Activated B cell treated with CpG ODN at 0.5 μM for 24 hours (primary cell): ENCODE measurements at regions of chr5 and their contacts with region 1.

Region 1: DNA sequence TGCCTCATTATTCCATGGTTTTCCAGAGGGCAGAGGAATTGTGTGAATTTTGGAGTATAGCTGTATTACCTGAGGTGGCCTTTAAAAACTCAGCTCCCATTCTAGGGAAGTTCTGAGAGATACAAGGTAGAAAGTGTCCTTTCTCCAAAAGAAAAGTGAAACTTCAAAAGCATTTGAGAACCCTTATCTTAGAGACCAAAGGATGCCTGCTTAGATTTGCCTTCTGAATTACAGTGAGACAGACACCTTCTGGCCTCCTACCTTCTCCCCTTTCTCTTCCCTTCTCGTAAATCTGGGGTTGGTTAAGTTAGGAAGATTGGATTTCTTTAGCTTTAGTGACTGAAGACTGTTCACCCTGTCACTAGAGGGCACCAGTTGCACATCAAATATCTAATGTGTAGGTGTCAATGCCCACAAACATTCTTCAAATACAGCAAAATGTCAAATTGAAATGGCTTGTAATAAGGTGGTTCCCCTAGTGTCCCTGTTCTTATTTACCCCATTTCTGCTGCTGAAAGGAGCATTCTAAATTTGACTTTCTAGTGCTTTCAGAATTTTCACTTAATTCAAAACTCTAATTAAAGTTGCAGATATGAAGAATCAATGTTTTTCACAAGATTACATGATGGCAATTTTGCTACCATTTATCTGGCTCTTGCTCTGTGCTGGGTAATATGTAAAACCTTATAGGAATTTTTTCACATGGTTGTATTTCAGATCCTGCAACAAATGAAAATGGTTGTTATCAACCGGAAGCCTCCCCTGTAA is 46.7 kb downstream of the PRRC1 start:
- DNase-seq: no peak
- ATAC-seq: peak; percentile 64
- H3K4me3 Mint-ChIP-seq: no peak overlapping the region
- H3K27ac Mint-ChIP-seq: no peak overlapping the region
- H3K4me1 Mint-ChIP-seq: peaks cover 3% of the 10 kb centered on the region
- H3K27me3 Mint-ChIP-seq: peaks cover 11% of the 10 kb centered on the region
- CTCF ChIP-seq: peak; percentile 38

Region 2: DNA sequence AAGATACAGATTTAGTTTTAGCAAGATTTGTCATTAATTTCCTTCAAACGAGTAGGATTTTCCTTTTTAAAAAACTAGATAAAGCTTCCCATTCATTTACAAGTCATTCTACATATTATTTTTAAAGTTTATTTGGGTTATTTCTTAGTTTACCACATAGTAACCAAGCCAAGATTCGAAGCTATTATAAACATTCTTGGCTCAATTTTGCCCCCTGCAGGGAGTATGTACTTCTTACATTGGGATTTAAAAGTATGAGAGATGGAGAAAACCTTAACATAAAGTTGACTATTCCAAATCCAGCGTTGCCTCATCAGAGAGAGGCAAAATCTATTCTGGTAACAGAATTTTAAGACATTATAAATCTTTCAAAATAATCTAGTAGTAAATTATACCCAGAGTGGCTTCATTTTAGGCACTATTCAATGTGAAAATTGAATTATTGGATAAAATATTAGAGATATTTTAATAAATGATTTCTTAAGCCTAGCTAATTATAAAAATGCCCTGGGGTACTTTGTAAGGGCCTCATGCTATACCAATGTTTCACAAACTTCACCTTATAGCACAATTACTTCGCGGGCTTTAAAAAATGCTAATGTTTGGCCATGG is 934.8 kb after region 1 on chr5:
- CTCF ChIA-PET with region 1: interaction called, 5 read pairs
- POLR2A ChIA-PET with region 1: no interaction called
- intact Hi-C with region 1: loop called (anchors 2 kb)
- DNase-seq: no peak
- ATAC-seq: no peak
- H3K4me3 Mint-ChIP-seq: no peak overlapping the region
- H3K27ac Mint-ChIP-seq: no peak overlapping the region
- H3K4me1 Mint-ChIP-seq: no peaks in the 10 kb centered on the region
- H3K27me3 Mint-ChIP-seq: no peaks in the 10 kb centered on the region
- CTCF ChIP-seq: no peak

Region 3: GRCh38 chr5:128844354-128844923 is 1280.3 kb after region 1 on chr5:
- CTCF ChIA-PET with region 1: no interaction called
- POLR2A ChIA-PET with region 1: no interaction called
- intact Hi-C with region 1: loop called (anchors 5 kb)
- DNase-seq: no peak
- ATAC-seq: no peak
- H3K4me3 Mint-ChIP-seq: no peak overlapping the region
- H3K27ac Mint-ChIP-seq: no peak overlapping the region
- H3K4me1 Mint-ChIP-seq: no peaks in the 10 kb centered on the region
- H3K27me3 Mint-ChIP-seq: peaks cover 2% of the 10 kb centered on the region
- CTCF ChIP-seq: no peak